Caco-2 (cell line): ENCODE measurements at regions of chr2 and their contacts with region 1.

Region 1: GRCh38 chr2:156156580-156156979 is 175.9 kb downstream of the NR4A2 start:
- DNase-seq: no peak
- H3K4me3 ChIP-seq: no peak overlapping the region
- H3K4me3 Mint-ChIP-seq: no peak overlapping the region
- H3K27ac Mint-ChIP-seq: no peak overlapping the region
- H3K4me1 ChIP-seq: no peaks in the 10 kb centered on the region
- H3K4me1 Mint-ChIP-seq: peaks cover 8% of the 10 kb centered on the region
- H3K27me3 ChIP-seq: no peaks in the 10 kb centered on the region
- H3K27me3 Mint-ChIP-seq: no peaks in the 10 kb centered on the region
- CTCF ChIP-seq: peak in 1 of 2 experiments; percentile 25

Region 2: DNA sequence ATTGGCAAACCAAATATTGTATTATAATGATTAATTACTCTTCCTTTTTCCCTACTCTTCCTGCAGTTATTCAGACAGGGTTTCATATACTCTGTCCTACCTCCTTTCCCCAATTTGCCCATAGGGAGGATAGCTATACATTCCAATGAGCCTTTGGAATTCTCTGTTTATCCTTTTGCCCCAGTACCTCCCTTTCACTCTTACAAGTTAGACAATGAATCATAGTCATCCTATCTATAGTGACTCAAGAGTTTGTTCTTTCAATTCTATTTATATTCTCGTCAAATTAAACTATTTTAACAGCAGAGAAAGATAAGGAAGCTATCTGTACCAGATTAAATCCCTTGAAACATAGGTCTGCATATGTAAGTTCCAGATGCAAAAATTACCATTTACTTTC is 261.6 kb before region 1 on chr2:
- CTCF ChIA-PET with region 1: no interaction called
- POLR2A ChIA-PET with region 1: no interaction called
- intact Hi-C with region 1: no loop called
- DNase-seq: no peak
- H3K4me3 ChIP-seq: no peak overlapping the region
- H3K4me3 Mint-ChIP-seq: no peak overlapping the region
- H3K27ac Mint-ChIP-seq: no peak overlapping the region
- H3K4me1 ChIP-seq: peaks cover 11% of the 10 kb centered on the region
- H3K4me1 Mint-ChIP-seq: peaks cover 20% of the 10 kb centered on the region
- H3K27me3 ChIP-seq: no peaks in the 10 kb centered on the region
- H3K27me3 Mint-ChIP-seq: no peaks in the 10 kb centered on the region
- CTCF ChIP-seq: no peak

Region 3: GRCh38 chr2:156181188-156181587 is 24.6 kb after region 1 on chr2:
- CTCF ChIA-PET with region 1: no interaction called
- POLR2A ChIA-PET with region 1: no interaction called
- intact Hi-C with region 1: no loop called
- DNase-seq: no peak
- H3K4me3 ChIP-seq: no peak overlapping the region
- H3K4me3 Mint-ChIP-seq: peak overlapping the region; percentile 52
- H3K27ac Mint-ChIP-seq: no peak overlapping the region
- H3K4me1 ChIP-seq: peaks cover 19% of the 10 kb centered on the region
- H3K4me1 Mint-ChIP-seq: peaks cover 13% of the 10 kb centered on the region
- H3K27me3 ChIP-seq: no peaks in the 10 kb centered on the region
- H3K27me3 Mint-ChIP-seq: no peaks in the 10 kb centered on the region
- CTCF ChIP-seq: no peak

Region 4: GRCh38 chr2:156215655-156216054 is 59.1 kb after region 1 on chr2:
- CTCF ChIA-PET with region 1: no interaction called
- POLR2A ChIA-PET with region 1: no interaction called
- intact Hi-C with region 1: loop called (anchors 2 kb)
- DNase-seq: no peak
- H3K4me3 ChIP-seq: no peak overlapping the region
- H3K4me3 Mint-ChIP-seq: no peak overlapping the region
- H3K27ac Mint-ChIP-seq: no peak overlapping the region
- H3K4me1 ChIP-seq: no peaks in the 10 kb centered on the region
- H3K4me1 Mint-ChIP-seq: no peaks in the 10 kb centered on the region
- H3K27me3 ChIP-seq: no peaks in the 10 kb centered on the region
- H3K27me3 Mint-ChIP-seq: no peaks in the 10 kb centered on the region
- CTCF ChIP-seq: no peak

Region 5: DNA sequence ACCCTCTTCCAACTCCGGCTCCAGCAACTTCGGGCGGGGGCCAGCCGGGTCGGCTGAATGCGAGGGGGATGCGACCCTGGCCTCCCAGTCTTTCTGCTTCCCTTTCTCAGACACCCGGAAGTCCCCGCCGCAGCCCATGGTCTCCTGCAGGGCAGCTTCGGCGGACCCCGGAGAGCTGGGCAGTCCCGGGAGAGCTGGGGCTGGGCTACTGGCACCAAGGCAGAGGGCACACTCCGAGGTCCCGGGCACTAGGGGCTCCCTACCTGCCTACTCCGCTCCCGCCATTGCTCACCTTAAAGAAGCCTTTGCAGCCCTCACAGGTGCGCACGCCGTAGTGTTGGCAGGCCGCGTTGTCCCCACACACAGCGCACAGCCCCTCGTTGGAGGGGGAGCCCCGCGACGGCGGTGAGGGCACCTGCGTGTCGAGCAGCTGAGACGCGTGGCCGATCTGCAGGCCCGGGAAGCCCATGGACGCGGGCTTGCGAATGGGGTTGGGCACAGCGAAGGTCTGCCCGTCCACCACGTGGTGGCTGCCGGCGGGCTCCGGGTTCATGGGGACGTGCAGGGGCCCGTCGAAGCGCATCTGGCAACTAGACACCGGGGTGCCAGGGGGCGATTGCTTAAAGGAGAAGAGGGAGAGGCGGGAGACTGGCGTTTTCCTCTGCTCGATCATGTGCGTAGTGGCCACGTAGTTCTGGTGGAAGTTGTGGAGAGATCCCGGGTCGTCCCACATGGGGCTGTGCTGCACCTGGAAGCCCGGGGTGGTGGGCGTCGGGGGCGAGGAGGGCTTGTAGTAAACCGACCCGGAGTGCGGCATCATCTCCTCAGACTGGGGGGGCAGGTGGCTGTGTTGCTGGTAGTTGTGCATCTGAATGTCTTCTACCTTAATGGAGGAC is 172.7 kb after region 1 on chr2:
- CTCF ChIA-PET with region 1: no interaction called
- POLR2A ChIA-PET with region 1: no interaction called
- intact Hi-C with region 1: no loop called
- DNase-seq: no peak
- H3K4me3 ChIP-seq: no peak overlapping the region
- H3K4me3 Mint-ChIP-seq: no peak overlapping the region
- H3K27ac Mint-ChIP-seq: no peak overlapping the region
- H3K4me1 ChIP-seq: no peaks in the 10 kb centered on the region
- H3K4me1 Mint-ChIP-seq: peaks cover 8% of the 10 kb centered on the region
- H3K27me3 ChIP-seq: no peaks in the 10 kb centered on the region
- H3K27me3 Mint-ChIP-seq: peaks cover 6% of the 10 kb centered on the region
- CTCF ChIP-seq: no peak